Head of caudate nucleus (tissue), 42 donors: ENCODE measurements at regions of chr5 and their contacts with region 1.

Region 1: DNA sequence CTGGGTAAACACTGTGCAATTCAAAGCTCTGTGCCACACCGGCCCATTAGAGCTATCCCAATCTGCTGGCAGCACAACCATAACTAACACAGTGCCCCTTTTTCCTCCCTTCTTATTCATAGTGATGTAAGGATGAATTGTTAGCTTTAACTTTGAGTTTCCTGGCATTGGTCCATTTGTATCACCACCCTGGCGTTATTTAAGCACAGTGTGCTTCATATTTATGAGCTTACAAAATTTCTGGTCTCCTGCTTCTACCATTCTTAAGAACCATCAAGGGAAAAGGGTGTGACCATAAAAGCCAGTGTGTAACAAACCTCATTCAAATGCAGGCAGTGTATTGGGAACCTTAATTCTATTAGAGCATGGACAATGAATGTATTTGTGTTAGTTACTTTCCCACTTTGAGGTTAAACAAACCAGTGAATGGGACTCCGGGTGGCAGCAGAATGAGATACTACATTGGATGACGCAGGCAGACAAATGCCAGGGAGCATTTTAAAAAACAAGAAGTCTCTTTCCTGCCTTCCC is 222.6 kb downstream of the TMEM161B start:
- DNase-seq: peak in 34 of 42 donors; percentile 3 to 79 (median 32)

Region 2: DNA sequence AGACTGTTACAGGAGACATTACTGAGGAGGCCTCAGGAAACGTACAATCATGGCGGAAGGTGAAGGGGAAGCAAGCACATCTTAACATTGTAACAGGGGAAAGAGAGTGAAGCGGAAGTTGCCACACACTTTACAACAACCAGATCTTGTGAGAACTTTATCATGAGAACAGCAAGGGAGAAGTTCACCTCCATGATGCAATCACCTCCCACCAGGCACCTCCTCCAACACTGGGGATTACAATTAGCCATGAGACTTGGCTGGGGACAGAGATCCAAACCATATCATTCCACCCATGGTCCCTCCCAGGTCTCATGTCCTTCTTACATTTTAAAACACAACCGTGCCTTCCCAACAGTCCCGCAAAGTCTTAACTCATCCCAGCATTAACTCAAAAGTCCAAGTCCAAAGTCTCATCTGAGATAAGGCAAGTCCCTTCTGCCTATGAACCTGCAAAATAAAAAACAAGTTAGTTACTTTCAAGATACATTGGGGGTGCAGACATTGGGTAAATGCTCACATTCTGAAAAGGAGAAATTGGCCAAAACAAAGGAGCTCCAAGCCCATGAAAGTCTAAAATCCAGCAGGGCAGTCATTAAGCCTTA is 84.3 kb after region 1 on chr5:
- intact Hi-C with region 1: loop called (anchors 10 kb)
- DNase-seq: no peak